ENCODE measurements at regions of chr1 and their contacts with region 1.

Region 1: GRCh38 chr1:95532335-95532734 is 298.3 kb downstream of the RWDD3 start:
- DNase-seq: no peak
- H3K4me3 ChIP-seq: no peak overlapping the region
- H3K27ac ChIP-seq: no peak overlapping the region
- H3K4me1 ChIP-seq: no peaks in the 10 kb centered on the region
- H3K27me3 ChIP-seq: no peaks in the 10 kb centered on the region
- CTCF ChIP-seq: peak in 1 of 2 donors; percentile 39

Region 2: GRCh38 chr1:95415146-95415545 is 117.2 kb before region 1 on chr1:
- CTCF ChIA-PET with region 1: no interaction called
- dilution Hi-C with region 1: no loop called
- in situ Hi-C with region 1: no loop called
- intact Hi-C with region 1: no loop called
- DNase-seq: no peak
- H3K4me3 ChIP-seq: no peak overlapping the region
- H3K27ac ChIP-seq: no peak overlapping the region
- H3K4me1 ChIP-seq: no peaks in the 10 kb centered on the region
- H3K27me3 ChIP-seq: no peaks in the 10 kb centered on the region
- CTCF ChIP-seq: no peak

Region 3: GRCh38 chr1:95604771-95605170 is 72.4 kb after region 1 on chr1:
- CTCF ChIA-PET with region 1: no interaction called
- dilution Hi-C with region 1: loop called (anchors 5 kb)
- in situ Hi-C with region 1: no loop called
- intact Hi-C with region 1: no loop called
- DNase-seq: no peak
- H3K4me3 ChIP-seq: no peak overlapping the region
- H3K27ac ChIP-seq: no peak overlapping the region
- H3K4me1 ChIP-seq: no peaks in the 10 kb centered on the region
- H3K27me3 ChIP-seq: no peaks in the 10 kb centered on the region
- CTCF ChIP-seq: no peak

Region 4: DNA sequence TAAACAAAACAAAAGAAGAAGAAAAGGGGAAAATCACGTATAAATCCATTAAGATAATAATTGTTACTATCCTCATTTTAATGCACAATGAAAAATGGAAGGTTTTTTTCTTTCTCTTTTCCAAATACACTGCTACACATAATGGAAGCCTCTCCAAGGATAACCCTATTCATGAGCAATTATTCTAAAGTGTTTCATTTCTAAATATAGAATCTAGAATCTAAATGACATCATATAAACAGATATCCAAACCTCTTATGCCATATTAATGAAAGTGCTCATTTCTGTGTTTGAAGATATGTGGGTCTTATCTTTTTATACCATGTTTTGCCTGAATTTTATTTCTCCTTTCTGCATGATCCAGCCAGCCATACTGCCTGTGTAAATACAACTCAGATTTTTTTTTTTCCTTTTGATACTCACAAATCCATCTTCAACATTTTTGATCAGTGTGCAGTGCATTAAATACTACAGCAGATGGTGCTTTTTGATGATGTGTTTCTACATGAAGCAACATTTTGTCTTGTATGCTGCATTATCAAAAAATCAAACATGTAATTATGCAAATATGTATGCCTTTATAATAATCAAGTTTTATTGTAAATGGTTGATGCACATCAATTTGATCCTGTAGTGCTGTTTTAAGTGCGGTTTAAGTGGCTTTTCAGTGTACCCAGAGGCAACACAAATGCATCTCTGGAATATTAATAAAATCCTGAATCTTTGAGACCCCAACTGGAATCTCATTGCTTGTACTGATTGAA is 563.7 kb after region 1 on chr1:
- CTCF ChIA-PET with region 1: interaction called, 10 read pairs
- dilution Hi-C with region 1: no loop called
- in situ Hi-C with region 1: no loop called
- intact Hi-C with region 1: no loop called
- DNase-seq: no peak
- H3K4me3 ChIP-seq: no peak overlapping the region
- H3K27ac ChIP-seq: no peak overlapping the region
- H3K4me1 ChIP-seq: no peaks in the 10 kb centered on the region
- H3K27me3 ChIP-seq: peaks cover 2% of the 10 kb centered on the region
- CTCF ChIP-seq: no peak